ENCODE measurements at regions of chr3 and their contacts with region 1.

Region 1: DNA sequence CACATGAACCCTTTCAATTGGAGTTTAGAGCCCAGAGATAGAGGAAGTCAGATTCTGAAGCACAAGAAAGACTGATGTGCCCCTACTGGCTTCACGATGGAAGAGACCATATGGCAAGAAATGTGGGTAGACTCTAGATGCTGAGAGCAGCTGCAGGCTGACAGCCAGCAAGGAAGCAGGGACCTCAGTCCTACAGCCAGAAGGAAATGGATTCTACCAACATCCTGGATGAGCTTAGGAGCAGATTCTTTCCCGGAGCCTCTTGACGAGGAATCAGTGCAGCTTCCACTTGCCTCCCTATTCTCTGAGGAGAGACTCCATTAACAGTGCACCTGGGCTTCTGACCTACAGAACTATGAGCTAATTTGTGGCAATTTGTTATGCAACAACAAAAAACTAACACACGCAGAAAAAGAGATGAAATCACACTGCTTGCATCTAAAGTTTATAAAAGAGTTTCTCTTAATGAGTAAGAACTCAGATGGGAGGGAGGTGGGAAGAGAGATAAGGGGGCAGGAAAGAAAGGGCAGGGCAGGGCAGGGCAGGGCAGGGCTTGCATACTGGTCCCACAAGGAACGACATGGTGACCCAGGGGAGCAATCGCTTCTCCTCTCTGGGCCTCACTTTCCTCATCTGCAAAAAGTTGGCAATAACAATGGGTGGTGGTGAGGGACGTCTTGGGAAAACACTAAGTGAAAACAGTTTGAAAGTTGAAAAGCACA is 440.9 kb downstream of the FOXP1 start:
- DNase-seq: peak in 2 of 10 donors; percentile 24 to 27
- ATAC-seq: peak; percentile 41 to 73
- H3K4me3 Mint-ChIP-seq: peak overlapping the region in 5 of 10 donors; percentile 5 to 49 (median 29)
- H3K27ac Mint-ChIP-seq: peak overlapping the region; percentile 32 to 95 (median 84)
- H3K4me1 Mint-ChIP-seq: peaks cover 43 to 86% (median 70%) of the 10 kb centered on the region in 4 donors
- H3K27me3 Mint-ChIP-seq: no peaks in the 10 kb centered on the region

Region 2: GRCh38 chr3:71130471-71131374 is 11.9 kb before region 1 on chr3:
- POLR2A ChIA-PET with region 1: interaction called, 10 read pairs
- DNase-seq: peak; percentile 46 to 90 (median 76)
- ATAC-seq: peak; percentile 77 to 83
- H3K4me3 Mint-ChIP-seq: peak overlapping the region; percentile 86 to 99 (median 93)
- H3K27ac Mint-ChIP-seq: peak overlapping the region; percentile 92 to 98 (median 96)
- H3K4me1 Mint-ChIP-seq: peaks cover 44 to 89% (median 84%) of the 10 kb centered on the region in 4 donors
- H3K27me3 Mint-ChIP-seq: no peaks in the 10 kb centered on the region

Measured in naive thymus-derived CD8-positive, alpha-beta T cell (primary cell).